AG04449 (cell line): ENCODE measurements at regions of chr7 and their contacts with region 1.

Region 1: DNA sequence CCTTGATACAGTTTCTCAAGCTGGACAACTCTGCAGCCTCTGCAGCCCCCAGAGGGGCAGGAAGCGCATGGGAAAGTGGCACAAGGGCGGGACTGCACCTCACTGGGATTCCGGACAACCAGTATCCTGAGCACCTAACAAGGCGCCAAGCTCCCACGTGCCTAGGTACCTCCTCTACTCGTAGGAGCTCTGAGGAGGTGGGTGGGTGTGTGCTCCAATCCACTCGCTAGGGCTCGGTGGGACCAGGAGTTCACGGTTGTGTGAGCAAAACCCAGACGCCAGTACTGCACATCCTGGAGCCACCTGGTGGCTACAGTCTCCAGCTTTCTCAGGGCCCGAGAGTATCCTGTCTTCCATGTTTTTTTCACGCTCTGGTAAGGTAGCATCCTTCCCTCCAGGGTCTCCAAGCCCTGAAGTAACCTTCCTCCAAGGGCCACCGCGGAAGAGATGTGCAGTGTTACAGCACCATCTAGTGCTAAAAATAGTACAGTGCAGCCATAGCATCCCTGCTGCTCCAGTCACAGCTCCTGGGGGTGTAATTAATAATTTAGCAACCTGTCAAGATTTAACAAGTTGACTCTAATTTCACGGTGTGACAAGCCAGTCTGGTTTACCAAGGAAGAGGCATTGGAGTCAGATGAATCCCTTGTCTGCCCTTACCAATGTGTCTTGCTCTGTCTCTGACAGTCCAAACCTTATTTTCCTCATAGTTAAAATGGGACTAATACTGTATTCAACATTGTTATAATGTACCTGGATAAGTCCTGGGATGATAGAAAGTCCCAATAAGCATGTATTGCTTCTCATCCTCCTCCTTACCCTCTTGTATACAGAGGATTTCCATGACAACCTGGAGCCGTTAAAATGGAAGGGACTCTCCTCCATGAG is 70.4 kb downstream of the HERPUD2 start:
- DNase-seq: no peak
- H3K4me3 ChIP-seq: no peak overlapping the region
- CTCF ChIP-seq: peak; percentile 65

Region 2: DNA sequence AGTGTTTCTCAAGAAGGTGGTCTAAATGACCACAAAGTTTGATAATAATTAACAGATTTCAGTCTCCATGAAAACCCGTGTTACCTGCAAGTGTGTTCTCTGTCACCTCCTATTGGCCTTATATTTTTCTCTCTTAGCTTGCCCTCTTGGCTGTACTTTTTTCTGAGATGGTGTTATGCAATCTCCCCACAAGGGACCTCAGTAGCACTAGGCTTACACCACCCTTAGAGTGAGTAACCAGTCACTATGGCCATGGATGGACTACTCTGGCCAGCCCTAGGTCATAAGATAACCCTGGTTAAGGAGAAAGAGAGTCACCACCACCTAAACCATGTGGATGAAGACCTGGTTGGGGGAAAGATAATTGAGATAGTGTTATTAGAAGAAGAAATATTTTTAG is 889.8 kb before region 1 on chr7:
- CTCF ChIA-PET with region 1: no interaction called
- POLR2A ChIA-PET with region 1: no interaction called
- DNase-seq: no peak
- H3K4me3 ChIP-seq: no peak overlapping the region
- CTCF ChIP-seq: no peak

Region 3: DNA sequence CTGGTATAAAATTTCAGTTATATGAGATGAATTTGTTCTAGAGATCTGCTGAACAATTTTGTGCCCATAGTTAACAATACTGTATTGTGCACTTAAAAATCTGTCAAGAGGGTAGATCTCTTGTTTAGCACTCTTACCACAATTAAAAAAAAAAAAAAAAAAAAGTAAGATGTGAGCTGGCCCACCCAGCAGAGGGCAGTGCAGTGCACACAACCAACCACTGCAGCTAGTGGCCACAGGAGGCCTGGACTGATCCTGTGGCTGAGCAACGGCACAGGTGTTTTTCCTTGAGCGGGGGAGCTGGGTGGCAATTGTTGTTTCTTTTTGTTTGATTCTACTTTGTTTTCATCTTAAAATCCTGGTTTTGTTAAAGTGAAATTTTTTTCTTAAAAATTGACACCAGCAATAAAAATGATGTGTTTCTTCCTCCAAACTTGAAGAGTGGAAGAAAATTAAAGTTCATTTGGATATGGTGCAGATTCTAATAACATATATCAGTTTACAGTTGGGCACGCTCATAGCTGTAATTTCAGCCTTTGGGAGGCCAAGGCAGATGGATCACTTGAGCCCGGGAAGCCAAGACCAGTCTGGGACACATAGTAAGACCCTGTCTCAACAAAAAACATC is 199.6 kb before region 1 on chr7:
- CTCF ChIA-PET with region 1: interaction called, 60 read pairs
- POLR2A ChIA-PET with region 1: no interaction called
- DNase-seq: no peak
- H3K4me3 ChIP-seq: no peak overlapping the region
- CTCF ChIP-seq: peak; percentile 72

Region 4: DNA sequence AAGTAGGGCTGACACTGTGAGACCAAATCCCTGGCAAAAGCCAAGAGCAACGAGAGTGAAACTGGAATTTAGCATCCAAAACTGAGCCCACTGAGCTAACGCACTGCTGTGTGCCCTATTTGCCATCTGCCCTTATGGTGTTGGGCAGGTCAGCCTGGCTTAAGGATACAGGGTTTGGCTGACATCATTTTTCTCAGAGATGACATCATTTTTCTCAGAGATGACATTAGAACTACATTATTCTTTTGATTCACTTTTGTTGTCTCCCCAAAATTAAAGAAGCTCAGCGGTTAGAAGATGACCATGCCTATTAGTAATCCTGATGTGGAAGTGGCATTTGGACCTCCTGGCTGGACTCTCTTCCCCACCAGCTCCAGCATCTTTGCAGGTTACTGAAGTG is 17.2 kb before region 1 on chr7:
- CTCF ChIA-PET with region 1: interaction called, 60 read pairs
- POLR2A ChIA-PET with region 1: no interaction called
- DNase-seq: no peak
- H3K4me3 ChIP-seq: no peak overlapping the region
- CTCF ChIP-seq: no peak

Region 5: GRCh38 chr7:35613096-35613495 is 11.4 kb before region 1 on chr7:
- CTCF ChIA-PET with region 1: interaction called, 60 read pairs
- POLR2A ChIA-PET with region 1: no interaction called
- DNase-seq: peak; percentile 23
- H3K4me3 ChIP-seq: no peak overlapping the region
- CTCF ChIP-seq: no peak

Region 6: GRCh38 chr7:35647171-35647574 is 22.6 kb after region 1 on chr7:
- CTCF ChIA-PET with region 1: interaction called, 13 read pairs
- POLR2A ChIA-PET with region 1: no interaction called
- DNase-seq: no peak
- H3K4me3 ChIP-seq: no peak overlapping the region
- CTCF ChIP-seq: no peak